Mammary epithelial cell (primary cell): ENCODE measurements at regions of chr10 and their contacts with region 1.

Region 1: GRCh38 chr10:104608091-104608828 is 32.8 kb upstream of the SORCS3 start:
- DNase-seq: no peak
- H3K4me3 ChIP-seq: no peak overlapping the region
- H3K27ac ChIP-seq: no peak overlapping the region
- H3K4me1 ChIP-seq: no peaks in the 10 kb centered on the region
- H3K27me3 ChIP-seq: peaks cover under 1% of the 10 kb centered on the region
- CTCF ChIP-seq: no peak

Region 2: GRCh38 chr10:104501864-104502579 is 106.2 kb before region 1 on chr10:
- CTCF ChIA-PET with region 1: no interaction called
- dilution Hi-C with region 1: loop called (anchors 5 kb)
- in situ Hi-C with region 1: no loop called
- intact Hi-C with region 1: no loop called
- DNase-seq: no peak
- H3K4me3 ChIP-seq: no peak overlapping the region
- H3K27ac ChIP-seq: no peak overlapping the region
- H3K4me1 ChIP-seq: no peaks in the 10 kb centered on the region
- H3K27me3 ChIP-seq: peaks cover 2% of the 10 kb centered on the region
- CTCF ChIP-seq: no peak